ENCODE measurements at regions of chr1 and their contacts with region 1.

Region 1: GRCh38 chr1:28088168-28088961 is at the start of gene EYA3:
- H3K4me3 Mint-ChIP-seq: peak within 1 kb of the TSS; percentile 90
- H3K27ac Mint-ChIP-seq: peak within 1 kb of the TSS; percentile 93
- H3K4me1 Mint-ChIP-seq: peaks cover 57% of the 10 kb centered on the region
- H3K27me3 Mint-ChIP-seq: no peaks in the 10 kb centered on the region

Region 2: GRCh38 chr1:28112388-28113241 is 24.2 kb after region 1 on chr1:
- intact Hi-C with region 1: loop called (anchors 1 kb)
- H3K4me3 Mint-ChIP-seq: peak overlapping the region; percentile 13
- H3K27ac Mint-ChIP-seq: peak overlapping the region; percentile 96
- H3K4me1 Mint-ChIP-seq: peaks cover 73% of the 10 kb centered on the region
- H3K27me3 Mint-ChIP-seq: no peaks in the 10 kb centered on the region

Region 3: DNA sequence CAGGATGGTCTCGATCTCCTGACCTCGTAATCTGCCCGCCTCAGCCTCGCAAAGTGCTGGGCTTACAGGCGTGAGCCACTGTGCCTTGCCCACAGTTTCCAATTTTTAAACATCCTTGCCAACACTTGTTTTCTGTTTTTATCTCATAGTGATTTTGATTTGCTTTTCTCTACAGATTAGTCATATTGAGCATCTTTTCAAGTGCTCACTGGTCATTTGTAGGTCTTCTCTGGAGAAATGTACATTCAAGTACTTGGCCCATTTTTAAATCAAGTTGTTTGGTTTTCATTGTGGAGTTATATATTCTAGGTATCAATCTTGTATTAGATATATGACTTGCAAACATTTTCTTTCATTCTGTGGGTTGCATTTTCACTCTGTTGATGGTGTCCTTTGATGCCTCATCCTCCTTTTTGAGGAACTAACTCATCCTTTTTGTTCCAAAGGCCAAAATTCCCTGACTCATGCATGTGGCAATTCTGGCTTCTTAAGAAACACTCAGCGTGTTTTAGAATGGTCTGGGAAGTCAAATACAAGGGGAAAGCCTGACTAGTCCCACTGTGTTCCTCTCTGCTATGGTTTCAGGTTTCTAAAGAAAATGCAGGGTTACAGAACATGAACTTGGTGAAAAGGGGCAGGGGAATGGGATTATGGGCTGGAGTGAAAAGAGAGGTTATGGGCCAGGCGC is 50.8 kb after region 1 on chr1:
- intact Hi-C with region 1: loop called (anchors 1 kb)
- H3K4me3 Mint-ChIP-seq: peak overlapping the region; percentile 22
- H3K27ac Mint-ChIP-seq: peak overlapping the region; percentile 95
- H3K4me1 Mint-ChIP-seq: peaks cover 87% of the 10 kb centered on the region
- H3K27me3 Mint-ChIP-seq: no peaks in the 10 kb centered on the region

Region 4: DNA sequence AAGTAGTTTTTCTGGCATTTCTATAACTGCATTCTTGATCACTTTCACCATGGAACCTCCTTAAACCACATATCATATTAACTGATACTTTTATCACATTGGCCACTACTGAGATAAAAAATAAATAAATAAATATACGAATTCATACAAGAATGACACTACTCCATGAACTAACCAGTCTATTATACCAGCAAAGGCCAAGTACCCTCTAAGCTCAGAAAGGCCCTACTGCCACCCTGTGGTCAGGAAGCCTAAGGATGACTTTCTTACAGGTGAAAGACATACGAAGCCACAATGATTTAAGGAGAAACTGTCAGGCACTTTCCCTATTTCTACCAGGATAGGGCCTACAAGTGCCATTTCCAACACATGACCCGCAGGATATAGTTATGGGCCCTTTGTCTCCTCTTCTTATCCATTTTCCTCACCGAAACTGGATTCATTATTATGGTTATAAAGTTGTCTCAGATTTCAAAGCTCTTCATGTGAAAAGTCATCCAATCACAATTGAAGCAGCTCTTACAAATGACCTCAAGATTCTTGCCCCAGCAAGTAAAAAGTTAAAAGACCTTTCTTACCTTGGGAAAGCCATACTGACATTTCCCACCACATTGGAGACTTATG is 120.6 kb after region 1 on chr1:
- intact Hi-C with region 1: loop called (anchors 2 kb)
- H3K4me3 Mint-ChIP-seq: no peak overlapping the region
- H3K27ac Mint-ChIP-seq: no peak overlapping the region
- H3K4me1 Mint-ChIP-seq: no peaks in the 10 kb centered on the region
- H3K27me3 Mint-ChIP-seq: no peaks in the 10 kb centered on the region